Activated B cell treated with CpG ODN at 0.5 μM for 24 hours (primary cell): ENCODE measurements at regions of chr15 and their contacts with region 1.

Region 1: GRCh38 chr15:64651573-64652260 is 123.7 kb downstream of the RBPMS2 start:
- DNase-seq: no peak
- ATAC-seq: peak; percentile 86
- H3K4me3 Mint-ChIP-seq: peak overlapping the region; percentile 38
- H3K27ac Mint-ChIP-seq: peak overlapping the region; percentile 80
- H3K4me1 Mint-ChIP-seq: peaks cover 13% of the 10 kb centered on the region
- H3K27me3 Mint-ChIP-seq: no peaks in the 10 kb centered on the region
- CTCF ChIP-seq: no peak

Region 2: GRCh38 chr15:64209680-64210334 is 441.9 kb before region 1 on chr15:
- CTCF ChIA-PET with region 1: interaction called, 4 read pairs
- POLR2A ChIA-PET with region 1: no interaction called
- intact Hi-C with region 1: loop called (anchors 10 kb)
- DNase-seq: no peak
- ATAC-seq: peak; percentile 10
- H3K4me3 Mint-ChIP-seq: no peak overlapping the region
- H3K27ac Mint-ChIP-seq: no peak overlapping the region
- H3K4me1 Mint-ChIP-seq: no peaks in the 10 kb centered on the region
- H3K27me3 Mint-ChIP-seq: no peaks in the 10 kb centered on the region
- CTCF ChIP-seq: no peak

Region 3: GRCh38 chr15:64426845-64427465 is 224.8 kb before region 1 on chr15:
- CTCF ChIA-PET with region 1: interaction called, 16 read pairs
- POLR2A ChIA-PET with region 1: no interaction called
- intact Hi-C with region 1: loop called (anchors 1 kb)
- DNase-seq: no peak
- ATAC-seq: no peak
- H3K4me3 Mint-ChIP-seq: no peak overlapping the region
- H3K27ac Mint-ChIP-seq: no peak overlapping the region
- H3K4me1 Mint-ChIP-seq: peaks cover 13% of the 10 kb centered on the region
- H3K27me3 Mint-ChIP-seq: no peaks in the 10 kb centered on the region
- CTCF ChIP-seq: no peak

Region 4: DNA sequence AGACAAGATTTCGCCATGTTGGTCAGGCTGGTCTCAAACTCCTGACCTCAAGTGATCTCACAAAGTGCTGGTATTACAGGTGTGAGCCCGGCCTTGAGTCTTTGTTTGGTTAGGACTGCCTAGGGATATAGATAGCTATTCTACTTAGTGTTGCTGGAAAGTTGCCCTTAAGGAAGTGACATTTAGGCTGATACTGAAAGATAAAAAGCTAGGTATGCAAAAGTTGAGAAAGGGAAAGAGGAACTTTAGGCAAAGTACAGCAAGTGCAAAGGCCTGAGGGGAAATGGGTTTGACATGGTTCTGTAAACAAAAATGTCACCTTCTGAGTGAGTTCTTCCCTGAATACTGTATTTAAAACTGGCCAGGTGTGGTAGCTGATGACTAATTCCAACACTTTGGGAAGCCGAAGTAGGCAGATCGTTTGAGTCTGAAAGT is 79.8 kb before region 1 on chr15:
- CTCF ChIA-PET with region 1: interaction called, 3 read pairs
- POLR2A ChIA-PET with region 1: no interaction called
- intact Hi-C with region 1: loop called (anchors 5 kb)
- DNase-seq: no peak
- ATAC-seq: peak; percentile 72
- H3K4me3 Mint-ChIP-seq: peak overlapping the region; percentile 42
- H3K27ac Mint-ChIP-seq: peak overlapping the region; percentile 89
- H3K4me1 Mint-ChIP-seq: peaks cover 72% of the 10 kb centered on the region
- H3K27me3 Mint-ChIP-seq: no peaks in the 10 kb centered on the region
- CTCF ChIP-seq: no peak

Region 5: DNA sequence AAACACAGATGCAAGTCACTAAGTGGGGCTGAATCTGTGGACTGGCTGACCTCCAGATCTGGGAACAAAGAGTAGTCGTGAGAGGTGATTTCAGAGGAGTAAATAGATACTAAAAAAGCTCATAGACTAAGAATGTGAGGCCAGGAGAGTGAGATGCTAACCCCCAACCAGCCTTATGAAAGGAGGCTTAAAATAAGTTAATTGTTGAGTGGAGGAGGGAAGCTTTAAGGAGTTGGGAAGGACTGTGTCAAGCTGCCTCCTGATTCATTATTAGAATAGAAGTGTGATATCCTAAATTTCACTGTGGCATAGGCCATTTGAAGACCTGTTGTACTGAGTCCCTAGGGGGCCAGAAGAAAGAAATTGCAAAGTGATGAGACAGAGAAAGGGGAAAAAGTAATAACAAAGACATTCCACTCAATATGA is 16.0 kb after region 1 on chr15:
- CTCF ChIA-PET with region 1: no interaction called
- POLR2A ChIA-PET with region 1: no interaction called
- intact Hi-C with region 1: no loop called
- DNase-seq: no peak
- ATAC-seq: no peak
- H3K4me3 Mint-ChIP-seq: no peak overlapping the region
- H3K27ac Mint-ChIP-seq: no peak overlapping the region
- H3K4me1 Mint-ChIP-seq: no peaks in the 10 kb centered on the region
- H3K27me3 Mint-ChIP-seq: no peaks in the 10 kb centered on the region
- CTCF ChIP-seq: no peak